HEK293T (cell line): ENCODE measurements at regions of chr3 and their contacts with region 1.

Region 1: GRCh38 chr3:52685709-52686691 is at the starts of genes GNL3 and PBRM1:
- DNase-seq: peak; percentile 93

Region 2: DNA sequence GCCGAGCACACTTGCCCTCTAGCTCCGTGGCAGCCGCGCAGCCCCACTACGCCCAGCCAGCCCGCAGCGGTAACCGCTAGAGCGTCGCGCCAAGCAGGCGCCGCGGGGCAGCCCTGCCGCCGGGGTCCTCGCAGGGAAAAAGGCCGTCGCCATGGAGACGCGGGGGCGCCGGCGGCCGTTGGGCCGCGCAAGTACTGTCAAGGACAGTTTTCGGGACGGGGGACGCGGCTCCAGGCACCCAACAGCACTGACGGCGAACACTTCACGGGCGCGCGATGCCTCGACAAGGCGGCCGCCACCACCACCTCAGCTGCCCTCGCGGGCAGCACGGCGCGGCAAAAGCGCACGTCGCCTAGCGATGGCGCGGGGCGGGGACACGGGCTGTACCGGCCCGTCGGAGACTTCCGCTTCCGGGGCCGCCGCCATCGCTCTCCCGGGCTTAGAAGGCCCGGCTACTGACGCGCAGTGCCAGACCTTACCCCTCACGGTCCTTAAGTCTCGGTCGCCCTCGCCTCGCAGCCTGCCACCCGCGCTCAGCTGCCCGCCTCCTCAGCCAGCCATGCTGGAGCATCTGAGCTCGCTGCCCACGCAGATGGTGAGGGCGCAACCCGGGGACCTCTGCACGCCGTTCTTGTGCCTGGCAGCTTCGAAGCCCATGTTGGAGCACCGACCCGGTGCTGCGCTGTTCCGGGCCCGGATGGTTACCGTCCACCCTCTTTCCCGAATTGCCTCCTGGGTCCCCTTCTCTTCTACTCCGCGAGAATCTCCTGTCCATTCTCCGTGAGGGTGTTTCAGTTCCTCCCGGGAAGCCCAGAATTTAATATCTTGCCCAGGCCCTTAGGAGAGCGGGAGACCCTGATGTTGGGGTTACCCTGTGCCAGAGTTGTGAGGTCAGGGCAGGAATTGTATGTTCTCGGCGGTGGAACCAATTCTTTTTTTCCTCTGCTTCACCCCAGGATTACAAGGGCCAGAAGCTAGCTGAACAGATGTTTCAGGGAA is 20.0 kb after region 1 on chr3 and contains the starts of genes GLT8D1 and SPCS1:
- CTCF ChIA-PET with region 1: no interaction called
- POLR2A ChIA-PET with region 1: interaction called, 11 read pairs
- DNase-seq: peak; percentile 91

Region 3: DNA sequence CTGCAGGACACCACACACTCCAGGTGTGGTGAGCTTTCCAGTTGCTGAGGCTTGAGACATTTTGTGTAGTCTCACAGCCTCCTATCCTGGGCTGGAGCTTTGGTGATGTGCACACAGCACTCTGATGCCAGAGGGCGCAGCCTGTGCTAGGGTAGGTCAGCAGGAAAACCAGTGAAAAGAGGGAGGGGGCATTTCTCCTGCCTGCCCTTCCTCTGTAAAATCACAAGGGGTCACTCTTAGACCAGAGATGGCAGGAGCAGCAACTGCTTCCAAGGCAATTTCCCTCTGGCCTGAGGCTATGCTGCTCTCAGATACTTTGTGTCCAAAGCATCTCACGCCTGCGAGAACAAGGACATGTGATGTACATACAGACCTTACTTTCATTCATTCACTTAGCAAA is 165.3 kb after region 1 on chr3:
- CTCF ChIA-PET with region 1: no interaction called
- POLR2A ChIA-PET with region 1: no interaction called
- DNase-seq: peak; percentile 78